Activated CD4-positive, alpha-beta memory T cell treated with anti-CD3 and anti-CD28 coated beads for 36 hours (primary cell): ENCODE measurements at regions of chr15 and their contacts with region 1.

Region 1: DNA sequence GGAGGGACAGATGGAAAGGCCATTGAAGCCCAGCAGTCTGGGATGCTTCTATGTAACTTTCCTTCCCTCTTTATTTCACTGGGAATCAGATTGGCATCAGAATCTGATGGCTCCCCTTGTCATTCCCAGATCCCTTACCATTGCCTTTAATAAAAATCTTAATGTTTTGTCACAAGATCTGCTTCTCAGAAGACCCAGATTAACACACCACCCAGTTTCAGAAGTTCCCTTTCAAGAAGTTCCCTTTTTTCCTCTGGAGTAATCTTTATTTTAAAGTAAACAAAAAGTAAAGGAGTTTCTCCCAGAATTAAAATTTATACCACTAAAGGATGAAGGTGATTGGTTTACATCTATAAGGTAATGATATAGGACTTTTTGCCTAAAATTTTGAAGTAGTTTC is 76.4 kb downstream of the UBR1 start:
- DNase-seq: no peak
- H3K4me3 Mint-ChIP-seq: no peak overlapping the region
- H3K27ac Mint-ChIP-seq: no peak overlapping the region
- H3K4me1 Mint-ChIP-seq: peaks cover 3% of the 10 kb centered on the region
- H3K27me3 Mint-ChIP-seq: no peaks in the 10 kb centered on the region

Region 2: GRCh38 chr15:42775416-42775815 is 254.1 kb before region 1 on chr15:
- CTCF ChIA-PET with region 1: no interaction called
- POLR2A ChIA-PET with region 1: no interaction called
- intact Hi-C with region 1: loop called (anchors 5 kb)
- DNase-seq: no peak
- H3K4me3 Mint-ChIP-seq: no peak overlapping the region
- H3K27ac Mint-ChIP-seq: no peak overlapping the region
- H3K4me1 Mint-ChIP-seq: no peaks in the 10 kb centered on the region
- H3K27me3 Mint-ChIP-seq: no peaks in the 10 kb centered on the region

Region 3: GRCh38 chr15:43081283-43081682 is 51.8 kb after region 1 on chr15:
- CTCF ChIA-PET with region 1: no interaction called
- POLR2A ChIA-PET with region 1: no interaction called
- intact Hi-C with region 1: no loop called
- DNase-seq: no peak
- H3K4me3 Mint-ChIP-seq: no peak overlapping the region
- H3K27ac Mint-ChIP-seq: no peak overlapping the region
- H3K4me1 Mint-ChIP-seq: peaks cover 9% of the 10 kb centered on the region
- H3K27me3 Mint-ChIP-seq: no peaks in the 10 kb centered on the region